Panc1 (cell line): ENCODE measurements at regions of chr10 and their contacts with region 1.

Region 1: GRCh38 chr10:27986821-27987220 is 12.1 kb downstream of the ODAD2 start:
- DNase-seq: no peak
- ATAC-seq: no peak
- H3K4me3 ChIP-seq: no peak overlapping the region
- H3K27ac ChIP-seq: no peak overlapping the region
- H3K4me1 ChIP-seq: no peaks in the 10 kb centered on the region
- H3K27me3 ChIP-seq: no peaks in the 10 kb centered on the region
- CTCF ChIP-seq: no peak

Region 2: DNA sequence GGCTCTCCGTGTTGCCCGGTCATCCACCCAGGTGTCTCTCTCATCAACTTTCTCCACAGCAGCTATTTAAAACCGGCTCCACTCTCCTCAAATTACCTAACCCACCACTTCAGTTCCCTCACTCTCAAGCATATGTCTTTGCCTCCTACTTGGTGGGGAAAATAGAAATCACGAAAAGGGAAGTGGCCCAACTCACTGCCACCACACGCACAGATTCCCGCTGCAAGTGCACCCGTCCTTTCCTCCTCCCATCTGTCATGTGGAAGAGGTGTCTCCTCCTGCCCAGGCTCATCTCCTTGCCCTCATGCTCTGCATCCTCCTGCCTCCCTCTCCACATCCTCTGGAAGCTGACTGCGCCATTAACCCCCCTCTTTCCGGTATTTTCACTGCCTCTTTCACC is 160.5 kb before region 1 on chr10:
- CTCF ChIA-PET with region 1: interaction called, 12 read pairs
- POLR2A ChIA-PET with region 1: no interaction called
- in situ Hi-C with region 1: no loop called
- intact Hi-C with region 1: no loop called
- DNase-seq: no peak
- ATAC-seq: no peak
- H3K4me3 ChIP-seq: no peak overlapping the region
- H3K27ac ChIP-seq: no peak overlapping the region
- H3K4me1 ChIP-seq: no peaks in the 10 kb centered on the region
- H3K27me3 ChIP-seq: no peaks in the 10 kb centered on the region
- CTCF ChIP-seq: no peak